Activated B cell treated with CpG ODN at 0.5 μM for 24 hours (primary cell): ENCODE measurements at regions of chr3 and their contacts with region 1.

Region 1: DNA sequence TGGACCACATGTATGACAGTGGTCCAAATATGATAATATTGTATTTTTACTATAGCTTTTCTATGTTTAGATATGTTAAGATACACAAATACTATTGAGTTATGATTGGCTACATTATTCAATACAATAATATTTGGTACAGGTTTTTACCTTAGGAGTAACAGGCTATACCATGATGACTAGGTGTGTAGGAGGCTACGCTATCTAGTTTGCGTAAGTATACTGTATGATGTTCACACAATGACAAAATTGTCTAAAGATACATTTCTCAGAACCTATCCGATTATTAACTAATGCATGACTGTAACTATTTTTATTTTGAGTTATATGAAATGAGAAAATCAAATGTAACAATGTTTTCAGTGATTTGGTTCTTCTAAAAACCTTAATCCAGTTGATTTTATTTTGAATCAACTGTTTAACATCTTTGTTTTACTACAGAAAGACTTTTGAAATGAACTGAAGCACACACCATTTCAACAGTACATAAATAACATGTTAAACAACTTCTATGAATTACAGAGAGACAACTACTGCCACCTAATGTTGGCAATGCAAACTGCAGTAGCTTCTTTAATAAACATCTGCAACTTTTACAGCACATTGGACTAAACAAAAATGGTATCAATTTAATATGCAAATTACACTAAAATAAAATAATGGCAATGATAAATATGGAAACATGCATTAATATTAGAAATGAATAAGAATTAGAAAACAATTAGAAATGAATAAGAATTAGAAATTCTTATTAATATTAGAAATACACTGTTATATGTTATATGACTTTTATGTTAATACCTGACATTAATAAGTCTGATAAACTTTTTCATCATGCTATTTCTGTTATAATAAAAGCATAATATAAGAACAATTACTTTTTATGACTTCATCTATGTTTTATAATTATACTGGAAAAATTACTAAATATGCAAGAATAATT is 255.7 kb downstream of the MBNL1 start:
- DNase-seq: no peak
- ATAC-seq: peak; percentile 77
- H3K4me3 Mint-ChIP-seq: no peak overlapping the region
- H3K27ac Mint-ChIP-seq: no peak overlapping the region
- H3K4me1 Mint-ChIP-seq: peaks cover 33% of the 10 kb centered on the region
- H3K27me3 Mint-ChIP-seq: no peaks in the 10 kb centered on the region
- CTCF ChIP-seq: peak; percentile 96

Region 2: DNA sequence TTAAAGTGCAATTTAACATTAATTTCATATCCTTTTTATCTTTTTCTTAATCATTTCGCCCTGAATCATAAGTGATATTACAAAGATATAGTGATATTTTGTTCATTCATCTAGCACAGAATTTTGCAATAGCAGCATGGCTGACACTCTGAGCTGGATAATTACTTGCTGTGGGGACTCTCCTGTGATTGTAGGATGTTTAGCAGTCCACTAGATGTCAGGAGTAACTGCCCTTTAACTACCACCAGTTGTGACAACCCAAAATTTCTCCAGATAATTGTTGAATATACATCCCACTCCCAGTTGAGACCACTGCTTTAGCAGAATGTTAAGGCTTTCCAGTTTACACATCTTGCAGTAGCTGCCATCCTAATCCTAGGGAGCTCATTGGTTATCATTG is 452.5 kb before region 1 on chr3:
- CTCF ChIA-PET with region 1: no interaction called
- POLR2A ChIA-PET with region 1: no interaction called
- intact Hi-C with region 1: loop called (anchors 5 kb)
- DNase-seq: no peak
- ATAC-seq: peak; percentile 66
- H3K4me3 Mint-ChIP-seq: no peak overlapping the region
- H3K27ac Mint-ChIP-seq: no peak overlapping the region
- H3K4me1 Mint-ChIP-seq: no peaks in the 10 kb centered on the region
- H3K27me3 Mint-ChIP-seq: no peaks in the 10 kb centered on the region
- CTCF ChIP-seq: no peak

Region 3: DNA sequence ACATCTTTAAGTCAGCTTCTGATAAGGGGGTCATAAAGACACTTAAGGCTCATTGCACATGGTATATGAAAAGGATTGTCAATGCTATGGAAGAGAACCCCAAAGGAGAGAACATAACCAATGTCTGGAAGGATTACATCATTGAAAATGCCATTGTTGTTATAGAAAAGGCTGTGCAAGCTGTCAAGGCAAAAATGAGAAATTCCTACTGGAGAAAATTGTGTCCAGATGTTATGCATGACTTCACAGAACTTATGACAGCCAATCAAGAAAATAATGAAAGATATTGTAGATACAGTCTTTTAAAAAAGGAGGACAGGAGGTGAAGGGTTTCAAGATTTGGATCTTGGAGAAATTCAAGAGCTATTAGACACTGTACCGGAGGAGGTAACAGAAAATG is 352.0 kb before region 1 on chr3:
- CTCF ChIA-PET with region 1: no interaction called
- POLR2A ChIA-PET with region 1: no interaction called
- intact Hi-C with region 1: no loop called
- DNase-seq: no peak
- ATAC-seq: no peak
- H3K4me3 Mint-ChIP-seq: no peak overlapping the region
- H3K27ac Mint-ChIP-seq: no peak overlapping the region
- H3K4me1 Mint-ChIP-seq: peaks cover 2% of the 10 kb centered on the region
- H3K27me3 Mint-ChIP-seq: no peaks in the 10 kb centered on the region
- CTCF ChIP-seq: no peak

Region 4: GRCh38 chr3:152508705-152509104 is 15.8 kb before region 1 on chr3:
- CTCF ChIA-PET with region 1: interaction called, 151 read pairs
- POLR2A ChIA-PET with region 1: interaction called, 28 read pairs
- intact Hi-C with region 1: loop called (anchors 1 kb)
- DNase-seq: no peak
- ATAC-seq: no peak
- H3K4me3 Mint-ChIP-seq: peak overlapping the region; percentile 6
- H3K27ac Mint-ChIP-seq: peak overlapping the region; percentile 82
- H3K4me1 Mint-ChIP-seq: peaks cover 88% of the 10 kb centered on the region
- H3K27me3 Mint-ChIP-seq: no peaks in the 10 kb centered on the region
- CTCF ChIP-seq: no peak